Dendritic cell treated with granulocyte-macrophage colony-stimulating factor and Interleukin-4, amounts not matched to agents 40 ng/mL and 50 ng/mL, for 4 days (primary cell): ENCODE measurements at regions of chr9 and their contacts with region 1.

Region 1: GRCh38 chr9:28976684-28977083 is 1403.4 kb upstream of the C9orf72 start:
- H3K4me3 Mint-ChIP-seq: no peak overlapping the region
- H3K27ac Mint-ChIP-seq: no peak overlapping the region
- H3K4me1 Mint-ChIP-seq: no peaks in the 10 kb centered on the region
- H3K27me3 Mint-ChIP-seq: no peaks in the 10 kb centered on the region

Region 2: GRCh38 chr9:29021632-29022031 is 44.9 kb after region 1 on chr9:
- intact Hi-C with region 1: loop called (anchors 5 kb)
- H3K4me3 Mint-ChIP-seq: no peak overlapping the region
- H3K27ac Mint-ChIP-seq: no peak overlapping the region
- H3K4me1 Mint-ChIP-seq: no peaks in the 10 kb centered on the region
- H3K27me3 Mint-ChIP-seq: no peaks in the 10 kb centered on the region